ENCODE measurements at regions of chr16 and their contacts with region 1.

Region 1: DNA sequence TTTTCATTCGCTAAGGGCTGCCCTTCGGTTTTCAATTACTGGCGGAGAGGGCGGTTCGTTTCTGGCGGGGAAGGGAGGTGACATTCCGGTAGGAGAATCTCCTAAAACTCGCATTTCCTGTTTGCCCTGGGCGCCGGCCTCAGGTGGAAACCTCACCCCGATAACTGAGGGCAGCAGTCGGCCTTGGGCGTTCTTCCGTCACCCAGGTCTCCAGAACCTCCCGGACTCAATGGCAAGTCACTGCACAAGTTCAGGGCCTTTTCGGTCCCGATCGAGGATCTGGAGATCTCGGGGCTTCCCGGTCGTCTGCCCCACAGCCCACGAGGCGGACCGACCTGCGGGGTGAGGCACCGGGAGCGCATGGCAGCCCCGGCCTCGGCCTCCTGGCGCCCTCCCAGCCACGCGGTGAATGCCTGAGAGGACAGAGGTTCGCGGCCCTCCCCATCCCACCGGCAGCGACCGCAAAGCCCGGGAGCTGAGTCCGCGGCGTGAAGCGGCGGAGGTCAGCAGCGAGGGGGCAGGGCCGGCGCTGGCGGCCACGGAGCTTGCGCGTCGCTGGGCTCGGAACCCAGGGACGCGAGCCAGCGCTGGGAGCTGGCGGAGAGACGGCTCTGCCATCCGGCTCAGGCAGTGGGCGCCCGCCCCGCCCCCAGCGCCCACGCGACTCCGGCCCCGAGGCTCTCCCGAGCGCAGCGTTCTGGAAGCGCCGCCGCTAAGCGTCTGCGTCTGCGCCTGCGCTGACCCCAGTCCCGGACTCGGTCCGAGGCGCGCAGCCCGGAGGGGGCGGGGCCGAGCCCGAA is 58.4 kb downstream of the SRL start:
- DNase-seq: peak; percentile 92 to 97
- H3K4me3 ChIP-seq: peak overlapping the region; percentile 80
- H3K27ac ChIP-seq: peak overlapping the region; percentile 95
- H3K4me1 ChIP-seq: peaks cover 23% of the 10 kb centered on the region
- H3K27me3 ChIP-seq: no peaks in the 10 kb centered on the region
- CTCF ChIP-seq: no peak

Region 2: GRCh38 chr16:3938848-3939624 is 244.4 kb before region 1 on chr16:
- CTCF ChIA-PET with region 1: no interaction called
- POLR2A ChIA-PET with region 1: interaction called, 24 read pairs
- intact Hi-C with region 1: no loop called
- DNase-seq: peak; percentile 49 to 77
- H3K4me3 ChIP-seq: no peak overlapping the region
- H3K27ac ChIP-seq: no peak overlapping the region
- H3K4me1 ChIP-seq: no peaks in the 10 kb centered on the region
- H3K27me3 ChIP-seq: no peaks in the 10 kb centered on the region
- CTCF ChIP-seq: peak; percentile 85

Measured in PC-9 (cell line).